ENCODE measurements at regions of chr11 and their contacts with region 1.

Region 1: DNA sequence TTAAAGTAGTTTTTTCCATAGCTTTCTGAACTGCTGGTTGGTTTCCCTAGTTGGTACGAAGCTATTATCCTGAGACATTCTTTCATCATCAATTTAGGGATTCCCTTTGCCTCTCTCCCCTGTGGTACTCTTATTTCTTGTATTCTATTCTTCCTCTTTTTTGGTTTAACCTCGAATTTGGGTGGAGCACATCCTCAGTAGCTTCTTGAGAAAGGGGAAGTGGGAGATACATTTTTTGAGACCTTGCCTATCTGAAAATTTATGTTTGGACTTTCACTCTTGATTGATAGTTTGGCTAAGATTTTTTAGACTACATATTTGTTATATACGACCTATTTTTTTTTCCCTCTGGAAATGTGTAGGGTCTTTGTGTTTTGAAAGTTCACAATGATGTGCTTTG is 121.7 kb upstream of the ZBED5 start:
- DNase-seq: no peak
- ATAC-seq: peak; percentile 71
- H3K4me3 Mint-ChIP-seq: peak overlapping the region; percentile 55
- H3K27ac Mint-ChIP-seq: peak overlapping the region; percentile 68
- H3K4me1 Mint-ChIP-seq: peaks cover 68% of the 10 kb centered on the region
- H3K27me3 Mint-ChIP-seq: no peaks in the 10 kb centered on the region
- CTCF ChIP-seq: no peak

Region 2: GRCh38 chr11:11010624-11011127 is 31.1 kb after region 1 on chr11:
- CTCF ChIA-PET with region 1: interaction called, 4 read pairs
- POLR2A ChIA-PET with region 1: interaction called, 5 read pairs
- intact Hi-C with region 1: loop called (anchors 2 kb)
- DNase-seq: no peak
- ATAC-seq: no peak
- H3K4me3 Mint-ChIP-seq: no peak overlapping the region
- H3K27ac Mint-ChIP-seq: no peak overlapping the region
- H3K4me1 Mint-ChIP-seq: peaks cover 24% of the 10 kb centered on the region
- H3K27me3 Mint-ChIP-seq: peaks cover 8% of the 10 kb centered on the region
- CTCF ChIP-seq: no peak

Region 3: DNA sequence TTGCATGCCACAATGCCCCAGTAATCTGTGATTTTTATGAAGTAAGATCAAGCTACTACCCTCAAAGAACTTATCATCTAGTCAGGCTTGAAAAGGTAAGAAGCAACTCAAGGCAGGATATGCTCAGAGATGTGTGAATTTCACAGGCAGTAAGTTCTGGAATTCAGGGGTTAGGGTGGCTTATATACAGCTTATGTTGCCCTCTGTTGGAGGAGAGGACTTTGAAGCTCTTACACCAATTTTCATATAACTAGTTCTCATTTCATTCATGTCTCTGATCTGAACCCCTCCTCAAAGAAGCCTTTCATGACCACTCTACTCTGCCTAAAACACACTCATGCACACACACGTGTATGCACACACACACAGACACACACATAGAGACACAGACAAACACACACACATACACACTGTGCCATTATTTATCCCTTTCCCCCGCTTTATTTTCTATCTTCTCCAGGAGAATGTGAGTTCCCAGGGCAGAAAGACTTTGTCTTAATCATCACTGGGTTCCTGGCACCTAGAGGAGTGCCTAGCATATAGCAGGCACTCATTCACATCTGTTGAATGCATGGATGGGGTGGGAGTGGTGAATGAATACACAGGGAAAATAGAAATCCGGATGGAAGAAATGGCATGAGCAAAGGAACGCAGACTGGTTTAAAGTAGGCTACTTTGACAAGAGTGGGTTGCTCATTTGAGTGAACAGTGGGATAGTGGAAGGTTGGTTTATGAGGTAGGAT is 99.0 kb after region 1 on chr11:
- CTCF ChIA-PET with region 1: no interaction called
- POLR2A ChIA-PET with region 1: no interaction called
- intact Hi-C with region 1: no loop called
- DNase-seq: no peak
- ATAC-seq: no peak
- H3K4me3 Mint-ChIP-seq: no peak overlapping the region
- H3K27ac Mint-ChIP-seq: no peak overlapping the region
- H3K4me1 Mint-ChIP-seq: no peaks in the 10 kb centered on the region
- H3K27me3 Mint-ChIP-seq: peaks cover 24% of the 10 kb centered on the region
- CTCF ChIP-seq: no peak

Measured in activated B cell treated with CpG ODN at 0.5 μM for 24 hours (primary cell).